Breast epithelium (tissue), 4 donors: ENCODE measurements at regions of chr21 and their contacts with region 1.

Region 1: GRCh38 chr21:43703035-43703880 is 15.7 kb upstream of the PDXK start:
- DNase-seq: no peak
- H3K4me3 ChIP-seq: no peak overlapping the region
- H3K27ac ChIP-seq: no peak overlapping the region
- H3K4me1 ChIP-seq: no peaks in the 10 kb centered on the region
- H3K27me3 ChIP-seq: no peaks in the 10 kb centered on the region
- CTCF ChIP-seq: no peak
- POLR2A ChIP-seq: no peak

Region 2: DNA sequence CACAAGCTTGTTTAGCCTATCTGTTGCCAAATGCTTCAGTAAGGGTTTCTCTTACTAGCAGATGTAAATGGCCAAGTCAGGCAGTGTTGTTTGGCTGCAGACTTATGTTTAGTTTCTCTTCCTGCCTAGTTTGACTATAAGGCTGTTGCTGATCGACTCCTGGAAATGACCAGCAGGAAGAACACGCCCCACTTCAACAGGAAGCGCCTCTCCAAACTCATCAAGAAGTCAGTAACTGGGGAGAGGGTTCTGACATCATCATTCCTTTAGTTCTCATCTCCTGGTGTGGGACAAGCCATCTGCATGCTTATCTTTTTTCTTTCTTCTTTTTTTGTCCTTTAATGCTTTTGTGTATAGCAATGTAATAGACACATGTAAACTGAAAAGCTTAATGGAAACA is 18.8 kb before region 1 on chr21:
- intact Hi-C with region 1: loop called (anchors 2 kb)
- DNase-seq: no peak
- H3K4me3 ChIP-seq: no peak overlapping the region
- H3K27ac ChIP-seq: peak overlapping the region in 1 of 2 donors; percentile 34
- H3K4me1 ChIP-seq: no peaks in the 10 kb centered on the region
- H3K27me3 ChIP-seq: no peaks in the 10 kb centered on the region
- CTCF ChIP-seq: no peak
- POLR2A ChIP-seq: no peak